Right ventricle myocardium inferior (tissue), 1 donor: ENCODE measurements at regions of chrX and their contacts with region 1.

Region 1: GRCh38 chrX:120560842-120561633 is at the start of gene CUL4B:
- DNase-seq: peak; percentile 95
- ATAC-seq: peak; percentile 96
- total RNA-seq, gene CUL4B: 18.3 TPM

Region 2: DNA sequence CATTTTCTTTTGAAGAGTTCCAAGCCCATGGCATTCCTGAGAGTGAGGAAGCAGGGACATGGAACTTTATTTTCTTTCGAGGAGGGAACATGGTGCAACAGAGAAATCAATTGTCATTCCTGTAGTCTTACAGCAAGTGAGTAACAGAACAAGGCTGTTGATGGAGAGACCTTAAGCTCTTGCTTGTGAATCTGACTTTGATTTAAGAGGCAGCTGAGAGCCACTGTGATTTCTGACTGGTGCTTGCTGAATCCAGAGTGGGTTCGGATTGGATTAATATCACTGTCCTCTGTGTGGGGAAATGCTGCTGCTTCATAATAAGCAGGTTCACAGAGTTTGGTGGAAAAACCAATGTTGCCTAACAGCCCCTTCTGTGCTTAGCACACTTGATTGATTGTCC is 203.9 kb before region 1 on chrX:
- intact Hi-C with region 1: no loop called
- DNase-seq: no peak
- ATAC-seq: no peak

Region 3: GRCh38 chrX:120485638-120486520 is 75.2 kb before region 1 on chrX:
- intact Hi-C with region 1: loop called (anchors 5 kb)
- DNase-seq: peak; percentile 85
- ATAC-seq: peak; percentile 92

Region 4: GRCh38 chrX:120603707-120604360 is 42.8 kb after region 1 on chrX and contains the start of gene MCTS1:
- intact Hi-C with region 1: loop called (anchors 1 kb)
- DNase-seq: peak; percentile 87
- ATAC-seq: peak; percentile 97
- total RNA-seq, gene MCTS1: 33.8 TPM

Region 5: GRCh38 chrX:120629667-120630537 is 68.9 kb after region 1 on chrX and contains the start of gene C1GALT1C1:
- intact Hi-C with region 1: loop called (anchors 2 kb)
- DNase-seq: peak; percentile 96
- ATAC-seq: peak; percentile 100
- total RNA-seq, gene C1GALT1C1: 16.8 TPM